Colonic mucosa (tissue), 4 donors: ENCODE measurements at regions of chr13 and their contacts with region 1.

Region 1: DNA sequence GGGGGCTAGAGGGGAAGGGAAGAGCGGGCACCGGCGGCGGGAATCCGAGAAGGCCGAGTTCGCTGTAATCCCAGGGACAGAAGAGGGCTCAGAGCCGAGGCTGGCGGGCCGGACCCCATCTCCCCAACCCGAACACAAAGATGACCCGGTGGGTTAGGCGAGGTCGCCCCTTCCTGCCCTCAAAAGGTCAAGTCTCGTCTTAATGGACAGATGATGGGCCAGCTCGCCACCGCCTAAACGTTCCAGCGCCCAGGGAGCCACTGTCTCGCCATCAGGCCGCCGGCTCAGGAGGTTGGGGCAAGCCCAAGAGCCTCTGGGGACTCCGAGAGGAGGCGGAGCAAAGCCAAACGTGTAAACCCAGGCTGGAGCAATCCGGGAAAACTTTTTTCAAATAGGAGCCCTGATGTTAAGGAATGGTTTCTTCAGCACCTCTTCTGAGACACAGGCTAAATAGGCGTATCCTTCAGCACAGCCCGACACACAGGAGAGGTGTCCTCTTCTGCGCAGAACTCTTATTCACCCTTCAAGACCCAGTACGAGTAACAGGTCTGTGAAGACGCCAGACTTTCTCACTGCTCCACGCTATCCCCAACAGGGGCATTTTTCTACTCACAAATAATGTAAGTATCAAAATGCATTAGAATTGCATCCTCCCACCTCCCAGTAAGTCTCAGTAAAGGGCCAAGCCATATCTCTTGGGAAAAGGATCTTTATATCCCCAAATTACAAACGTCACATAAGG is 6.3 kb upstream of the POU4F1 start:
- DNase-seq: no peak
- H3K4me3 ChIP-seq: peak overlapping the region; percentile 33
- H3K27ac ChIP-seq: no peak overlapping the region
- H3K4me1 ChIP-seq: peaks cover 6% of the 10 kb centered on the region
- H3K27me3 ChIP-seq: peaks cover 60% of the 10 kb centered on the region
- CTCF ChIP-seq: no peak

Region 2: GRCh38 chr13:78625384-78625783 is 15.7 kb after region 1 on chr13:
- intact Hi-C with region 1: no loop called
- DNase-seq: no peak
- H3K4me3 ChIP-seq: no peak overlapping the region
- H3K27ac ChIP-seq: no peak overlapping the region
- H3K4me1 ChIP-seq: no peaks in the 10 kb centered on the region
- H3K27me3 ChIP-seq: no peaks in the 10 kb centered on the region
- CTCF ChIP-seq: no peak

Region 3: DNA sequence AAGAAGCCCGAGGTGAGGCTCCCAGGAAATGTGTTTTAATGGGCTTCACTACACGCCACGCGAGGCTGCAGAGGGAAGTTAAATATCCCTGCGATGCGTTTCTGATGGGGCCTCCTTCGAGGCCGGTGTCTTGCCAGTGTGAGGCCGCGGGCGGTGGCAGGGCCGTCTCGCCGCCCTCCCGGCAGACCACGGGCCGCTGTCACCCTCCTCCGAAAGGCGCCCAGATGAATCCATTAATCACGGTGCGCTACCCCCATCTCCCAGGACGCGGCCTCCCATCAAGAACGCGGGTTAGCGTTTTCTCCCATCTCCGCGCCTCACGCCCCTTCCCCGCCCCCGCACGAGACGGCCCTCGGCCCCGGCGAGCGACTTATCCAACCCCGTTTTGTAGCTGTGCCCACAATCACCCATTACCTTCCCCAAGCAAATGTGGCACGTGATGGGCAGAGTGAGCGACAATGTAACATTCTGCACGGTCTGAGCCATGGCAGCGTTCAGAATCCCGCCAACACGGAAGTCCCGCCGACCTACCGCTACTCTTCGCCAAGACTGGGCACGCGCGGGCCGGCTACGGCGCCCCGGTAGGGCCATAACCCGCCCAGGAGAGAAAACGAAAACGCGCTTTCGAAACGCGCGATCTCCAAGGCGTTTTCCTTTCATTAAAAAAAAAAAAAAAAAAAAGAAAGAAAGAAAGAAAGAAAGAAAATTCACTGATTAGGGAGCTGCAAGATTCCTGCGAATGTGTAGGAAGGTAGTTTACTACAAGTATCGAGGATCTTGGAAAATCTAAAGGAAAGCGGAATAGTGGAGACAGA is 49.2 kb after region 1 on chr13 and contains the start of gene OBI1:
- intact Hi-C with region 1: loop called (anchors 5 kb)
- DNase-seq: peak; percentile 96
- H3K4me3 ChIP-seq: peak within 1 kb of the TSS; percentile 94
- H3K27ac ChIP-seq: peak within 1 kb of the TSS; percentile 48
- H3K4me1 ChIP-seq: peaks cover 7% of the 10 kb centered on the region
- H3K27me3 ChIP-seq: no peaks in the 10 kb centered on the region
- CTCF ChIP-seq: no peak
- total RNA-seq, gene OBI1: 6.8 to 8.0 TPM